MCF 10A (cell line): ENCODE measurements at regions of chr1 and their contacts with region 1.

Region 1: GRCh38 chr1:147242439-147243227 is at the start of gene CHD1L:
- DNase-seq: peak; percentile 98
- H3K4me3 Mint-ChIP-seq: peak within 1 kb of the TSS; percentile 70
- H3K27ac Mint-ChIP-seq: peak within 1 kb of the TSS; percentile 71
- H3K4me1 Mint-ChIP-seq: peaks cover 42% of the 10 kb centered on the region
- H3K27me3 Mint-ChIP-seq: no peaks in the 10 kb centered on the region
- CTCF ChIP-seq: peak; percentile 97
- total RNA-seq, gene CHD1L: 73.6 and 81.5 TPM in 2 replicates

Region 2: GRCh38 chr1:147072370-147073061 is 170.1 kb before region 1 on chr1:
- CTCF ChIA-PET with region 1: no interaction called
- POLR2A ChIA-PET with region 1: no interaction called
- intact Hi-C with region 1: no loop called
- DNase-seq: no peak
- H3K4me3 Mint-ChIP-seq: no peak overlapping the region
- H3K27ac Mint-ChIP-seq: no peak overlapping the region
- H3K4me1 Mint-ChIP-seq: no peaks in the 10 kb centered on the region
- H3K27me3 Mint-ChIP-seq: no peaks in the 10 kb centered on the region
- CTCF ChIP-seq: no peak

Region 3: DNA sequence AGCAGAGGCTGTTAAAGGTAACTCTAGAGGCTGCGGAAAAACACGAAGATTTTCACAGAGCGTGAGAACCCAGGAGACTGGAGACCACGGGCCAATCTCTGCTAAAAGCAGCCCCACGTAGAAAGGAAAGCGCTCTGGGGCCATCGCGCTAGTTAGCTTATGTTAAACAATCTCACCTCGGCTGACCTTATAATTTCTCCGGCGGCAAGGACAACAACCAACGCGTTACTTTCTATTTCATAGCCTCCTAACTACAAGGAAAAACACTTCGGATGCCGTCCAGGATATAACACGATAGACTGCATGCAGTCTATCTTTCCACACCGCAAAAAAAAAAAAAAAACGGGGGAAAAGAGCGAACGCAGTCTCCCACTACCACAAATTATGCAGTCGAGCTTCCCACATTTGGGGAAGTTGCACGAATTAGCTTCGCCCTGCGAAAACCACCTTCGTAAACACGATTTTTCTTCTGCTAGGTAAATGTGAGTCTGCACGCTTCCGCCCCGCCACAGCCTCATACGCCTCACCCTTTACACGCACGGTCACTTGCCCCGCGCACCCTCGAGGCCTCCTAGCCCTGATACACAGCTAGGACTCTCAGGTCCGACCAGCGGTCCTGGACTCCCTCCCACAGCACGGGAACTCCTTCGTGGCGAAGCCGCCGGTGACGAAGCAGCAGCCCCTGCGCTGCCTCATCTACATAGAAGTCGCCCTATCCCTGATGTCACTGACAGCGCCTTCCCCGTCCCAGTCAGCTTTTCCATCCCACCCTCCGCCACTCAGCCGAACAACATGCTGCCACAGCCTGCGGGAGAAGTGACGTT is 158.1 kb before region 1 on chr1:
- CTCF ChIA-PET with region 1: interaction called, 4 read pairs
- POLR2A ChIA-PET with region 1: interaction called, 12 read pairs
- intact Hi-C with region 1: loop called (anchors 2 kb)
- DNase-seq: peak; percentile 91
- H3K4me3 Mint-ChIP-seq: peak overlapping the region; percentile 85
- H3K27ac Mint-ChIP-seq: peak overlapping the region; percentile 100
- H3K4me1 Mint-ChIP-seq: peaks cover 5% of the 10 kb centered on the region
- H3K27me3 Mint-ChIP-seq: peaks cover 20% of the 10 kb centered on the region
- CTCF ChIP-seq: no peak

Region 4: GRCh38 chr1:147162093-147162492 is 80.5 kb before region 1 on chr1:
- CTCF ChIA-PET with region 1: interaction called, 131 read pairs
- POLR2A ChIA-PET with region 1: interaction called, 298 read pairs
- intact Hi-C with region 1: no loop called
- DNase-seq: peak; percentile 23
- H3K4me3 Mint-ChIP-seq: no peak overlapping the region
- H3K27ac Mint-ChIP-seq: peak overlapping the region; percentile 83
- H3K4me1 Mint-ChIP-seq: peaks cover 25% of the 10 kb centered on the region
- H3K27me3 Mint-ChIP-seq: no peaks in the 10 kb centered on the region
- CTCF ChIP-seq: no peak

Region 5: DNA sequence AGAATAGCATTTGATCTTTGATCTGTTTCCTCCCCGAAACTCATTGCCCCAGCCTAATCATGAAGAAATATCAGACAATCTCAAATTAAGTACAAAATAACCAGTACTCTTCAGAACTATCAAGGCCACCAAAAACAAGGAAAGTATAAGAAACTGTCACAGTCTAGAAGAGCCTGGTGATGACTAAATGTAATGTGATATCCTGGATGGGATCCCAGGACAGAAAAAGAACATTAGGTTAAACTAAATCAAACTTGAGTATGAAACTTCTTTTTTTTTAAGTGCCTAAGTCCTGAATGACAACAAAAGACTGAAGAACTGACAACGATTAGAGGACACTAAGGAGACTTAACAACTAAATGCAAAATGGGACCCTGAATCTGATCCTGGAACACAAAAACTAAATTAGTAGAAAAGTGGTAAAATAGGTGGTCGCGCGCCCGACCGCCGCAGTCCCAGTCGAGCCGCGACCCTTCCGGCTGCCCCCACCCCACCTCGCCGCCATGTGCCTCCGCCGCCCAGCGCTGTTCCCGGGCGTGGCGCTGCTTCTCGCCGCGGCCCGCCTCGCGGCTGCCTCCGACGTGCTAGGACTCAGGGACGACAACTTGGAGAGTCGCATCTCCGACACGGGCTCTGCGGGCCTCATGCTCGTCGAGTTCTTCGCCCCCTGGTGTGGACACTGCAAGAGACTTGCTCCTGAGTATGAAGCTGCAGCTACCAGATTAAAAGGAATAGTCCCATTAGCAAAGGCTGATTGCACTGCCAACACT is 64.8 kb before region 1 on chr1:
- CTCF ChIA-PET with region 1: interaction called, 131 read pairs
- POLR2A ChIA-PET with region 1: interaction called, 298 read pairs
- intact Hi-C with region 1: loop called (anchors 1 kb)
- DNase-seq: peak; percentile 38
- H3K4me3 Mint-ChIP-seq: no peak overlapping the region
- H3K27ac Mint-ChIP-seq: peak overlapping the region; percentile 24
- H3K4me1 Mint-ChIP-seq: peaks cover 22% of the 10 kb centered on the region
- H3K27me3 Mint-ChIP-seq: no peaks in the 10 kb centered on the region
- CTCF ChIP-seq: no peak

Region 6: GRCh38 chr1:147225193-147225730 is 17.4 kb before region 1 on chr1 and contains the start of gene FMO5:
- CTCF ChIA-PET with region 1: interaction called, 22 read pairs
- POLR2A ChIA-PET with region 1: interaction called, 31 read pairs
- intact Hi-C with region 1: no loop called
- DNase-seq: peak; percentile 55
- H3K4me3 Mint-ChIP-seq: peak within 1 kb of the TSS; percentile 78
- H3K27ac Mint-ChIP-seq: peak within 1 kb of the TSS; percentile 94
- H3K4me1 Mint-ChIP-seq: peaks cover 10% of the 10 kb centered on the region
- H3K27me3 Mint-ChIP-seq: no peaks in the 10 kb centered on the region
- CTCF ChIP-seq: no peak
- total RNA-seq, gene FMO5: 0.72 and 0.86 TPM in 2 replicates

Region 7: GRCh38 chr1:147273409-147274336 is 31.0 kb after region 1 on chr1:
- CTCF ChIA-PET with region 1: interaction called, 9 read pairs
- POLR2A ChIA-PET with region 1: interaction called, 22 read pairs
- intact Hi-C with region 1: loop called (anchors 2 kb)
- DNase-seq: peak; percentile 92
- H3K4me3 Mint-ChIP-seq: peak overlapping the region; percentile 55
- H3K27ac Mint-ChIP-seq: peak overlapping the region; percentile 93
- H3K4me1 Mint-ChIP-seq: peaks cover 14% of the 10 kb centered on the region
- H3K27me3 Mint-ChIP-seq: no peaks in the 10 kb centered on the region
- CTCF ChIP-seq: peak; percentile 37

Region 8: GRCh38 chr1:147316968-147317367 is 74.3 kb after region 1 on chr1:
- CTCF ChIA-PET with region 1: no interaction called
- POLR2A ChIA-PET with region 1: no interaction called
- intact Hi-C with region 1: no loop called
- DNase-seq: no peak
- H3K4me3 Mint-ChIP-seq: no peak overlapping the region
- H3K27ac Mint-ChIP-seq: no peak overlapping the region
- H3K4me1 Mint-ChIP-seq: no peaks in the 10 kb centered on the region
- H3K27me3 Mint-ChIP-seq: peaks cover 10% of the 10 kb centered on the region
- CTCF ChIP-seq: no peak